GM10248 (cell line): ENCODE measurements at regions of chr15 and their contacts with region 1.

Region 1: DNA sequence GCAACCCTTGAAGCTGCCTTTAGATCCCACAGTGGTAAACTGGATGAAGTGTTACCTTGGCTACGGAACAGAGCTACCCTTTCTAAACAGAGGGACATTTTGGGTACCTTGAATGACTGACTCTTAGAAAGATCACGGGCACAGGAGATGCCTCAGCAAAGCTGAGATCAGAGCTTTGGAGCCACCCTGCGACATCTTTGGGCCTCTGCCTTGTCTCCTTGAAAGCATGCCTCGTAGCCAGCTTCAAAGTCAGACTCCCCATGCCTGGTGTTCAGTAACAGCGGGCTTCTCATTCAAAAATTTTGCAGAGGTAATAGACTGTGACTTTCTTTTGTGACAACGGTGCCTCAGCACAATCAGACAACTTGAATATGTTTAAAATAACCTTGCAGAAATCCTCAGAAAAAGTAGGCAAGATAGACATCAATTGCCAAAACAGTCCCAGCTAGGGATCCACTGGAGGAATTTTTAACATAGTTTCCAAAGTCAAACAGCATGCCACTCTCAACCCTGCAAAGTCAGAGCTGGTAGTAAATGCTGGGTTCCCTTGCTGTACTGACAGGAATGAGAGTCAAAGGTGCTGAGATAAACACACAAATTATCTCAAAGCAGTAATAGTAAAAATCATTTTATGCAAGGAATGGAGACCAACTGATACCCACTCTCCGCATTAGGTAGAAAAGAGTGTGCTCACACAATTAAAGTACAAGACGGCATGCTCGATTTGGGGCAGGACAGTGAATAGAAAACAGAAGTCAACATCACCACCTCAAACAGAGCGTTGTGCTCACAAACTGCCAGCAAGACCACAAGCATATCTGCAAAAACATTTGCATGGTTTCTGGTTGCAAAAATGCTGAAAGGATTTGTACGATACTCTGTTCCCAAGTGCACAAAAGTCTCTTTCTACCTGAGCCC is 82.1 kb downstream of the MYO1E start:
- DNase-seq: peak; percentile 39
- CTCF ChIP-seq: peak; percentile 2

Region 2: DNA sequence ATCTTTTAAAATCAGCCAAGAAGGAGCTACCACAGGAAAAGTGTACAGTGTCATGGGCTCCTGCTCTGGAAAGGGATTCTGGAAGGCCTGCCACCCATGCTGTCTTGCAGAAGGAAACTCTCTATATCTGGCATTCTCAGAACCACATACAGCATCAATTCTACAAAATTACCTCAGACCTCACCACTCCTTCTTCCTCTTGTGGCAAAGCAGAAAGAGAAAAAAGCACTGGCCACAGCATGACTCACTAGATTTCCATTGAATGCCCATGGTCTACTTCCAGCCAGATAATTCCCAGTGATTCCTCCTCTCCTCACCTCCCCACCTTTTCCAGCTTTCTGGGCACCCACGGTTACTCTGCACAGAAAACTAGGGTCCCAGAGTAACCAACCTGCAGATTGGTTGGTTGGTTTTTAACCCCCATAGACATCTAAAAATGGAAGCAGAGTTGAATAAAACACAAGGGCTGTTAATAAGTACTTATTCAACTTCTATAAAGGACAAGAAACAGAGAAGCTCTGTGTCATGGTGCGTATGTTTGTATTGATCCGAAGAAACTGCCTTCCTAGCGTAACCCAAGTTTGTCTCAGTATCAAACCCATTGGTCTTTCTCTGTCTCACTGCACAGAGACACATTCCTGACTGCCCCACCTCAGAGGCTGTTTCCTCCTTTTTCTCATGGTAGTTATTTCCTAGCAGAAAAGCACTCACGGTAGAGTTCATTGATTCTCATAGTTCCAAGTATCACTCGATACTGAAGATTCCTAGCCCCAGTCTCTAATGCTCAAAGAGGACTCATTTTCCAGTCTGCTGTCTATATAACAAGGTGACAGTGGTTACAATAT is 16.2 kb before region 1 on chr15:
- CTCF ChIA-PET with region 1: interaction called, 10 read pairs
- POLR2A ChIA-PET with region 1: no interaction called
- DNase-seq: no peak
- CTCF ChIP-seq: no peak